Caco-2 (cell line): ENCODE measurements at regions of chr9 and their contacts with region 1.

Region 1: DNA sequence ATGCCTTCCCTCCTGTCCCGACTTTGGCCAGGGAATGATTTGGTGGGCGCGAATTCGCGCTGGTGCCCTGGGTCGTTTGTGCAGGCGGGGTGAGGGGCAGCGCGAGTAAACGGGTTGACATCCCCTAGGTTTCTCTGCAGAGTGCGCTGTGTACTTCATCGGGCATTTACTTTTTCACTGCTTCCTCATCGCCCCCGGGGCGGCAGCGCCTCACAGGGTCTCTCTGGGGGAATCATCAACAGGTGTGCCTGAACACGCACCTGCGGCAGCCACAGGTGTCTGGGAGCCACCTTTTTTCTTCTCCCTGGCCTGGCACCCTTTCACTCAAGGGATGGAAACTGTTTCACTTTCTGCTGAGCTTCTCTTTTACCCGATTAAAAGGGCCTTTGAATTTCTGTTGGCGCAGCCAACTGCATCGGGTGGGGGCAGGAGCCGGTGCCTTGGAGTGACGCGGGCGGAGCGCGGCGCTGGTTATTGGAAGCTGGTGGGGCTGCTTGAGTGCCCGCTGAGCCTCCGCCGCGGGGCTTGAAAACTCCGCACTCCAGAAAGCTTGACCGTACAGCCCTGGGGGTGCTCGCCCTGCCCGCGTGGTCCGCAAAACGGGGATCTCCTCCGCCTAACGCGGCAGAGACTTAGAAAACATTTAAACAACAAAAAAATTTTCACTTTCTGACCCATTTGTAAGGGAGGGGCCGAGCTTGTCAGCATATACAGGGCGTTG is 52.1 kb upstream of the TJP2 start:
- DNase-seq: peak; percentile 9 to 29
- H3K4me3 ChIP-seq: peak overlapping the region; percentile 55
- H3K4me3 Mint-ChIP-seq: peak overlapping the region; percentile 85
- H3K27ac Mint-ChIP-seq: peak overlapping the region; percentile 39
- H3K4me1 ChIP-seq: no peaks in the 10 kb centered on the region
- H3K4me1 Mint-ChIP-seq: no peaks in the 10 kb centered on the region
- H3K27me3 ChIP-seq: no peaks in the 10 kb centered on the region
- H3K27me3 Mint-ChIP-seq: no peaks in the 10 kb centered on the region
- CTCF ChIP-seq: no peak

Region 2: GRCh38 chr9:69054989-69055388 is 67.0 kb before region 1 on chr9:
- CTCF ChIA-PET with region 1: no interaction called
- POLR2A ChIA-PET with region 1: no interaction called
- intact Hi-C with region 1: loop called (anchors 5 kb)
- DNase-seq: no peak
- H3K4me3 ChIP-seq: no peak overlapping the region
- H3K4me3 Mint-ChIP-seq: no peak overlapping the region
- H3K27ac Mint-ChIP-seq: no peak overlapping the region
- H3K4me1 ChIP-seq: no peaks in the 10 kb centered on the region
- H3K4me1 Mint-ChIP-seq: no peaks in the 10 kb centered on the region
- H3K27me3 ChIP-seq: no peaks in the 10 kb centered on the region
- H3K27me3 Mint-ChIP-seq: no peaks in the 10 kb centered on the region
- CTCF ChIP-seq: no peak

Region 3: GRCh38 chr9:69104830-69105527 is 17.0 kb before region 1 on chr9:
- CTCF ChIA-PET with region 1: no interaction called
- POLR2A ChIA-PET with region 1: no interaction called
- intact Hi-C with region 1: loop called (anchors 2 kb)
- DNase-seq: peak; percentile 64 to 85
- H3K4me3 ChIP-seq: no peak overlapping the region
- H3K4me3 Mint-ChIP-seq: no peak overlapping the region
- H3K27ac Mint-ChIP-seq: no peak overlapping the region
- H3K4me1 ChIP-seq: peaks cover 7% of the 10 kb centered on the region; the same call in 1 of the 2 replicates
- H3K4me1 Mint-ChIP-seq: no peaks in the 10 kb centered on the region
- H3K27me3 ChIP-seq: no peaks in the 10 kb centered on the region
- H3K27me3 Mint-ChIP-seq: no peaks in the 10 kb centered on the region
- CTCF ChIP-seq: no peak

Region 4: GRCh38 chr9:69186841-69187611 is 65.0 kb after region 1 on chr9:
- CTCF ChIA-PET with region 1: no interaction called
- POLR2A ChIA-PET with region 1: no interaction called
- intact Hi-C with region 1: loop called (anchors 5 kb)
- DNase-seq: no peak
- H3K4me3 ChIP-seq: no peak overlapping the region
- H3K4me3 Mint-ChIP-seq: peak overlapping the region; percentile 35
- H3K27ac Mint-ChIP-seq: peak overlapping the region; percentile 81
- H3K4me1 ChIP-seq: peaks cover 17% of the 10 kb centered on the region
- H3K4me1 Mint-ChIP-seq: peaks cover 3% of the 10 kb centered on the region
- H3K27me3 ChIP-seq: no peaks in the 10 kb centered on the region
- H3K27me3 Mint-ChIP-seq: no peaks in the 10 kb centered on the region
- CTCF ChIP-seq: no peak

Region 5: DNA sequence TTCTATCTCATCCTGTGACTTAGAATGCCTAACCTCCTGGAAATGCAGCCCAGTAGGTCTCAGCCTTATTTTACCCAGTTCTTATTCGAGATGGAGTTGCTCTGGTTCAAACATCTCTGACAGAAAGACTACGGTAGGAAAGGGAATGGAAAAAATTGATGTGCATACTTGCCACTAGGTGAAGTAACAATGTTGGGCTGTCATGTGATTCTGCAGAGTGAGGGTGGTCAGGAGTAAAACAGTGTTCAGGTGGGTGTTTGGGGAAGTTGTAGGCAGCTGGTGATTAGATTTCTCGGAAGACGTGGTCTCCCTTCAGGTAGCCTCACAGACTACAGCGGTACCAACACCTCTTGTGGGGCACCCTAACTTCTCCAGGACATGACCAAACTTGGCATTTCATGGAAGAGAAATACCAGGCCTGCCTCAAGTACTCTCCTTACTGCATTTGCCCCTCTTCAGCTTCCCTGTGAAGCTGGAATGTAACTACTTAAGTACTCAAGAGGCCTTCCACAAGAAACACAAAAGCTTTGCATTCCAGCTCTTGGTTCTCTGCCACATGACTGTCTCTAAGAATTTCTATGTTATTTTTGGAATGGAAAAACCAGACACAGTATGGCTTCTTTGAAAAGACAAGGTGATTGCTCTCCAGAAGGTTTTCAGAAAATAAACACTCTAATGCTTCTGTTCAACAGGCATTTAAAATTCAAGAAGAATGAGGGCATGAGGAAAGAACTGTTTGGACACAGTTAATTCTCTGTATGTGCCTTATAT is 185.6 kb after region 1 on chr9:
- CTCF ChIA-PET with region 1: no interaction called
- POLR2A ChIA-PET with region 1: no interaction called
- intact Hi-C with region 1: no loop called
- DNase-seq: no peak
- H3K4me3 ChIP-seq: no peak overlapping the region
- H3K4me3 Mint-ChIP-seq: no peak overlapping the region
- H3K27ac Mint-ChIP-seq: no peak overlapping the region
- H3K4me1 ChIP-seq: no peaks in the 10 kb centered on the region
- H3K4me1 Mint-ChIP-seq: no peaks in the 10 kb centered on the region
- H3K27me3 ChIP-seq: no peaks in the 10 kb centered on the region
- H3K27me3 Mint-ChIP-seq: no peaks in the 10 kb centered on the region
- CTCF ChIP-seq: no peak